ENCODE measurements at regions of chr3 and their contacts with region 1.

Region 1: DNA sequence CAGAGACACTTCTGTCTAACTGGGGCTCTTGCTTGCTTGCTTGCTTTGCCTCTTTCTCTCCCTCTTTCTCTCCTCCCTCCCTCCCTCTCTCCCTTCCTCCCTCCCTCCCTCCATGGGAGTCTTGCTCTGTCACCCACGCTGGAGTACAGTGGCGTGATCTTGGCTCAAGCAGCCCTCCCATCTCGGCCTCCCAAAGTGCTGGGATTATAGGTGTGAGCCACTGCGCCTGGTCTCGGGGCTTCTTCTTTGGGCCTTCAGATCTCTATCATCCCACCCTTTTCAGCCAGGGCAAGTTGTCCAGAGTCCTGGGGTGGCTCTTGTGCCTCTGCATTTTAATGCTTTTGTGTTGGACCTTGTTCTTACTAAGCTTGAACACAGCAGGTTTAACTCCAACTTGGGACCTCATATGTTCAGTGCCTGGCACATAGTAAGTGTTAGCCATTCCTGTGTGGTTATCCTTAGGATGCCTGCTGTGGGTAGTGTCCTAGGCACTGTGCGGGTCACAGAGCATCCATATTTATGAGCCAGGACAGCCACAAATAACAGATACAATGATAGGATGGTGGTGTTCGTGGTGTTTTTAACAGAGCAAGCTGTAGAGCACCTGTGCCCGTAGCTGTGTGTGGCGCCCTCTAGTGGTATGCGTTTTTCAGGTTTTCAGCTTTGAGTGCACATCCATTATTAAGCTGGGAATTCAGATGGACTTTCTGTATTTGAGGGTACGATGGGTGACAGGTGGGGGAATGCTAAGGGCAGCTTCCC is 75.1 kb downstream of the CCK start:
- DNase-seq: peak; percentile 62
- CTCF ChIP-seq: peak; percentile 77

Region 2: GRCh38 chr3:41853540-41854196 is 337.2 kb before region 1 on chr3:
- CTCF ChIA-PET with region 1: no interaction called
- POLR2A ChIA-PET with region 1: no interaction called
- DNase-seq: no peak
- CTCF ChIP-seq: no peak

Region 3: DNA sequence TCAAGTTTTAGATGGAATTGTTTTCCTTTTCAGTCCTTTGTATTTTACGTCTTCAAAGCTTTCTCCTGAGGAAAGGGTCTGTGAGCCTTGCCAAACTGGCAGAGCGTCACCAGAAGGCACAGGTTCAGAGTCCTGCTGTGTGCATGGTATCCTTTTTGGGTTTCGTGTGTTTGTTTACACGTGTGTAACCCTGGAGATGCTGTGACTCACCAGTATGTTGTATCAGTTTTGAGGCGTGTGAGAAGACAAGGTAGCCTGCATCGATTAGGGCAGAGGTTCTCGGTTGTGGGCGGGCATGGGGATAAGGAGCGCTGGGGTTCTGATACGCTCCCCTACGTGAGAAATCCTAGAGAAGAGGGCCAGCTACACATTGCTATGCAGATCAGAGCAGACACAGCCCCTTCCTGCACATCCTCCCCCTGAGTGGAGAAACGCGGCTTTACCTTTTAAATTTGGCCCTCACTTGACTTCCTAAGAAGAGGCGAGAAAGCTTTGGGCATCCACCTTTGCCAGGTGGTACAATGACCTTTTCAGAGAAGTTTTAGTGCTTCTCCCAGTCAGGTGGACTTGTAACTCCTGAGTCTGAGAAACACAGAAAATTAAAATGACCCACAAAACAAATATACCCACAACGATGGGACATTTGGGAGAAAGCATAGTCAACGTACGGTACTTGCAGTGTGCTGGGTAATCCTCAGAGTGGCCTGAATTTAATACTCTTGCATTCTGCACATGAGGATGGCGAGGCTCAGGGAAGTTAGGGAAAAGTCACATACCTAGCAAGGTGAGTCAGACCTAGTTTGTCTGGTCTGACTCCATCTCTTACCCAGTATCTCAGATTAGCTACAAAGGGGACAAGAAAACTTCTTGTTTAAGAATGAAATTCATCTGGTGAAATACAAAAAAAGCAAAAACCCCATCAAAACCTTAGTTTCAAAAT is 61.6 kb before region 1 on chr3:
- CTCF ChIA-PET with region 1: interaction called, 24 read pairs
- POLR2A ChIA-PET with region 1: no interaction called
- DNase-seq: no peak
- CTCF ChIP-seq: no peak

Region 4: GRCh38 chr3:42143440-42143839 is 47.4 kb before region 1 on chr3:
- CTCF ChIA-PET with region 1: interaction called, 10 read pairs
- POLR2A ChIA-PET with region 1: no interaction called
- DNase-seq: no peak
- CTCF ChIP-seq: no peak

Region 5: GRCh38 chr3:42179110-42179725 is 11.7 kb before region 1 on chr3:
- CTCF ChIA-PET with region 1: interaction called, 276 read pairs
- POLR2A ChIA-PET with region 1: no interaction called
- DNase-seq: no peak
- CTCF ChIP-seq: no peak

Region 6: DNA sequence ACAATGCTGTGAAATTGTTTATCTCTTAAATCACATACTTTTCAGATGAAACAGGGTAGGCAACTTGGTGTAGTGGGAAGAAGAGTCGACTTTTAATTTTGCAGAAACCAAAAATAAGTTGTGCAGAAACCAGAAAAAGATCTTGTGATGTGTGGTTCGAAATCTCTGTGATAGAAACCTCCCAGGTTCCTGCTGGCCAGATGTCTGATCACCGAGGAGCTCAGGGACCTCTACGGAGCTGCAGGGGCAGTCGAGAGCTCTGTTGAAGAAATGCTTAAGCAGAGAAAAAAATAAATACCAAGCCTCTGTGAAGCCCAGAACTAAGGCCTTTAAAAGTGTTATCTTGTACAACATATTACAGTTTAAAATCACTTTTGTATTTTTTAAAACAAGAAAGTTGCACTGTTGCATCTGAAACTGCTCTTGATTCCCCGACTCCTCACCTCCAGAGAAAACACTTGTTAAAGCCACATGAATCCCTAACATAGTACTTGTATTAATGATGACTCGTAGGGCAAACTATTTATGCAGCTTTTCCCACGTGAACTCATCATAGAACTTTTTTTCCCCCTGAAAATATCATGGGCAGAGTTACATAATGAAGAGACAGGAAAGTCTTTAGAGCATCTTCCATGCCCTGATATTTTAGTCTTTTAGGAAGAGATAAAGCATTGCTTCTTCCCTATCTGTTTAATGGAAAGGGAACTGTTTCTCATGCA is 23.8 kb after region 1 on chr3:
- CTCF ChIA-PET with region 1: interaction called, 30 read pairs
- POLR2A ChIA-PET with region 1: no interaction called
- DNase-seq: peak; percentile 54
- CTCF ChIP-seq: no peak

Measured in GM10248 (cell line).